B cell (primary cell): ENCODE measurements at regions of chr1 and their contacts with region 1.

Region 1: DNA sequence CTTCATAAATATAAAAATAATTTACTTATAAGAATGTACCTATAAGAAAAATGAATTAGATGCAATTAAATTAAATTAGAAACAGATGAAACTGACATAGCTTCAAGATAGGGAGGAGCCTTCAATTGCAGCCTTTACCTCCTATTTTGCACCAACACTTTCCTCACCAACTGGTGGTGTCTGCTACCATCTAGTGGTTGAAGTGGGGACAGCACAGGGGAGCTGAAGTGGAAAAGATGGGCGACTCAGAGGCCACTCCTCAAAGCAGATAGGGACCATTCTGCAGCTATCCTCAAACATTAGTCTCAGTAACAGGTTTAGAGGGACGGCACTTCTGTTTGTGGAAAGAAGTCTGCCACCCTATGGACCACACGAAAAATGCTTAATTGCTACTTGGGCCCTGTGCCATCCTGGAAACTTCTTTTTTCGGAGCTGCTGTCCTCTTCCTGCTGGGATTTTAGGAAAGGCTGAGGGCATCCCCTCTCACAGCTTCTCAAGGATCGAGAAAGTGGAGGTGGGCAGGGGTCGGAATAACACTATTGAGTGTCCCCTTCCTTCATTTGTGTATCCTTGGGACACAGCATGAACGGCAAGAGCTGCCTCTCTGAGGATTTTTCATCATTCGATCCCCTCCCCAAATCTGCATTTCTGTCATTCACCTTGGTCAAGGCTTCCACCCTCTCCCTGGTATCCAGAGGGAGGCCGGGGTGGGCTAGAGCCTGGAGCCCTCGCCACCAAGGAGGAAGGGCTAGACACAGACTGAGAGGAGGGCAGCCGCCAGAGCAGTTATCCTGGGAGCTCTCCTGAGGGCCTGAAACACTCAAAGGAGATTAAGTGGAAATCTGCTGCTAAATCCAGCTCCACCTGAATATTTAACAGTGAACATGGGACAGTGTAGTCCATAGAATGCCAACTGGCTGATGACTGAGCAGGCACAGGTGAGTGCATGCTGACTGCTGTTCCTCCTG is 9.6 kb downstream of the PROK1 start:
- DNase-seq: peak; percentile 87
- ATAC-seq: peak; percentile 99
- H3K4me3 ChIP-seq: no peak overlapping the region
- H3K4me3 Mint-ChIP-seq: no peak overlapping the region
- H3K27ac ChIP-seq: no peak overlapping the region
- H3K27ac Mint-ChIP-seq: no peak overlapping the region
- H3K4me1 ChIP-seq: peaks cover 0 to 2% of the 10 kb centered on the region in 2 donors
- H3K4me1 Mint-ChIP-seq: no peaks in the 10 kb centered on the region
- H3K27me3 ChIP-seq: peaks cover 0 to 3% (median 0%) of the 10 kb centered on the region in 4 experiments
- H3K27me3 Mint-ChIP-seq: peaks cover 4% of the 10 kb centered on the region
- CTCF ChIP-seq: peak; percentile 97

Region 2: GRCh38 chr1:110034451-110035235 is 425.9 kb before region 1 on chr1 and contains the start of gene STRIP1:
- CTCF ChIA-PET with region 1: interaction called, 5 read pairs
- POLR2A ChIA-PET with region 1: no interaction called
- intact Hi-C with region 1: loop called (anchors 2 kb)
- DNase-seq: peak; percentile 96
- ATAC-seq: peak; percentile 93
- H3K4me3 ChIP-seq: peak within 1 kb of the TSS; percentile 71 to 99 (median 93)
- H3K4me3 Mint-ChIP-seq: peak within 1 kb of the TSS; percentile 97
- H3K27ac ChIP-seq: peak within 1 kb of the TSS; percentile 76 to 95
- H3K27ac Mint-ChIP-seq: peak within 1 kb of the TSS; percentile 93
- H3K4me1 ChIP-seq: peaks cover 25 to 31% of the 10 kb centered on the region in 2 donors
- H3K4me1 Mint-ChIP-seq: peaks cover 43% of the 10 kb centered on the region
- H3K27me3 ChIP-seq: no peaks in the 10 kb centered on the region
- H3K27me3 Mint-ChIP-seq: no peaks in the 10 kb centered on the region
- CTCF ChIP-seq: no peak
- total RNA-seq, gene STRIP1: 97.5 and 105 TPM in 2 replicates

Region 3: DNA sequence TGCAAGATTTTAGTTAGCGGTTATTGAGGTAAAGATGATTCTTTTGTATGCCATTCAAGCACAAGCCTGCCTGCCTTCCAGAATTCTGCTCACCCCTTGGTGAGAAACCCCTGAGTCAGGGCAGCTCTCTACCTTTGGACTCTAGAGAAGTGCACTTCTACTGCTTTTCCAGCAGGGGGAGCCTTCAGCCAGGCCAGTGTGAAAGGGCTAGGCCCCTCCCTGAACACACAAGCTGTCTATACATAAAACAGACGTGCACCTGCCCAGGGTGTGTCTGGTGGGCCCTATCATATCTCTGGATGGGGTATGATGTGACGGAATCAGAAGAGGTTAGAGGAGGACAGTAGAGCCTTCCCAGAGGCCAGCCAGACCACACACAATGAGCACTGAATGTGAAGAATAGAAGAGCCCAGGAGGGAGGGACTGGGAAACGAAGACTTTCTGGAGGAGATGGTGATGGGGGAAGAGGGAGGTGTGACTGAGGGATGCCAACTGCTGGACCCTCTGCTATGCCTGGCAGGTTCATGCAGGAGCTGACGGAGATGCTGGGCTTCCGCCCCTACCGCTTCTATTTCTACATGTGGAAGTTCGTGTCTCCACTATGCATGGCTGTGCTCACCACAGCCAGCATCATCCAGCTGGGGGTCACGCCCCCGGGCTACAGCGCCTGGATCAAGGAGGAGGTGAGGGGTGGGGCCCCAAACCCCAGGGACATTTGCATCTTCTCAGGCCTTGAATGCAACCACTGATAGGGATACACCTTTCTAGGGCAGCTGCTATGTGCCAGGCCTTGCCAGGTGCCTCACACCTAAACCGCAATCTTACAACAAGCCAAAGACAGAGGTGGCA is 263.4 kb before region 1 on chr1:
- CTCF ChIA-PET with region 1: interaction called, 837 read pairs
- POLR2A ChIA-PET with region 1: no interaction called
- intact Hi-C with region 1: loop called (anchors 1 kb)
- DNase-seq: peak; percentile 71
- ATAC-seq: peak; percentile 93
- H3K4me3 ChIP-seq: no peak overlapping the region
- H3K4me3 Mint-ChIP-seq: no peak overlapping the region
- H3K27ac ChIP-seq: no peak overlapping the region
- H3K27ac Mint-ChIP-seq: no peak overlapping the region
- H3K4me1 ChIP-seq: no peaks in the 10 kb centered on the region
- H3K4me1 Mint-ChIP-seq: no peaks in the 10 kb centered on the region
- H3K27me3 ChIP-seq: peaks cover 0 to 3% (median 0%) of the 10 kb centered on the region in 4 experiments
- H3K27me3 Mint-ChIP-seq: peaks cover 4% of the 10 kb centered on the region
- CTCF ChIP-seq: peak; percentile 97

Region 4: GRCh38 chr1:110243574-110243973 is 217.0 kb before region 1 on chr1:
- CTCF ChIA-PET with region 1: interaction called, 13 read pairs
- POLR2A ChIA-PET with region 1: no interaction called
- intact Hi-C with region 1: no loop called
- DNase-seq: peak; percentile 78
- ATAC-seq: peak; percentile 80
- H3K4me3 ChIP-seq: no peak overlapping the region
- H3K4me3 Mint-ChIP-seq: peak overlapping the region; percentile 61
- H3K27ac ChIP-seq: peak overlapping the region in 1 of 2 donors; percentile 41
- H3K27ac Mint-ChIP-seq: peak overlapping the region; percentile 57
- H3K4me1 ChIP-seq: peaks cover 20 to 37% of the 10 kb centered on the region in 2 donors
- H3K4me1 Mint-ChIP-seq: peaks cover 40% of the 10 kb centered on the region
- H3K27me3 ChIP-seq: no peaks in the 10 kb centered on the region
- H3K27me3 Mint-ChIP-seq: no peaks in the 10 kb centered on the region
- CTCF ChIP-seq: no peak

Region 5: GRCh38 chr1:110319332-110320152 is 141.0 kb before region 1 on chr1:
- CTCF ChIA-PET with region 1: interaction called, 82 read pairs
- POLR2A ChIA-PET with region 1: no interaction called
- intact Hi-C with region 1: no loop called
- DNase-seq: no peak
- ATAC-seq: no peak
- H3K4me3 ChIP-seq: no peak overlapping the region
- H3K4me3 Mint-ChIP-seq: no peak overlapping the region
- H3K27ac ChIP-seq: no peak overlapping the region
- H3K27ac Mint-ChIP-seq: no peak overlapping the region
- H3K4me1 ChIP-seq: no peaks in the 10 kb centered on the region
- H3K4me1 Mint-ChIP-seq: no peaks in the 10 kb centered on the region
- H3K27me3 ChIP-seq: no peaks in the 10 kb centered on the region
- H3K27me3 Mint-ChIP-seq: no peaks in the 10 kb centered on the region
- CTCF ChIP-seq: no peak

Region 6: GRCh38 chr1:110407260-110408210 is 53.0 kb before region 1 on chr1 and contains the start of gene LAMTOR5:
- CTCF ChIA-PET with region 1: interaction called, 126 read pairs
- POLR2A ChIA-PET with region 1: interaction called, 4 read pairs
- intact Hi-C with region 1: loop called (anchors 1 kb)
- DNase-seq: peak; percentile 94
- ATAC-seq: peak; percentile 92
- H3K4me3 ChIP-seq: peak within 1 kb of the TSS; percentile 76 to 99 (median 90)
- H3K4me3 Mint-ChIP-seq: peak within 1 kb of the TSS; percentile 100
- H3K27ac ChIP-seq: peak within 1 kb of the TSS; percentile 87 to 90
- H3K27ac Mint-ChIP-seq: peak within 1 kb of the TSS; percentile 99
- H3K4me1 ChIP-seq: peaks cover 18 to 23% of the 10 kb centered on the region in 2 donors
- H3K4me1 Mint-ChIP-seq: peaks cover 25% of the 10 kb centered on the region
- H3K27me3 ChIP-seq: no peaks in the 10 kb centered on the region
- H3K27me3 Mint-ChIP-seq: no peaks in the 10 kb centered on the region
- CTCF ChIP-seq: peak; percentile 23
- total RNA-seq, gene LAMTOR5: 145 and 151 TPM in 2 replicates

Region 7: GRCh38 chr1:110472546-110472945 is 12.0 kb after region 1 on chr1:
- CTCF ChIA-PET with region 1: interaction called, 11 read pairs
- POLR2A ChIA-PET with region 1: no interaction called
- intact Hi-C with region 1: no loop called
- DNase-seq: no peak
- ATAC-seq: no peak
- H3K4me3 ChIP-seq: no peak overlapping the region
- H3K4me3 Mint-ChIP-seq: no peak overlapping the region
- H3K27ac ChIP-seq: no peak overlapping the region
- H3K27ac Mint-ChIP-seq: no peak overlapping the region
- H3K4me1 ChIP-seq: no peaks in the 10 kb centered on the region
- H3K4me1 Mint-ChIP-seq: no peaks in the 10 kb centered on the region
- H3K27me3 ChIP-seq: peaks cover 0 to 3% (median 0%) of the 10 kb centered on the region in 4 experiments
- H3K27me3 Mint-ChIP-seq: peaks cover 35% of the 10 kb centered on the region
- CTCF ChIP-seq: no peak

Region 8: DNA sequence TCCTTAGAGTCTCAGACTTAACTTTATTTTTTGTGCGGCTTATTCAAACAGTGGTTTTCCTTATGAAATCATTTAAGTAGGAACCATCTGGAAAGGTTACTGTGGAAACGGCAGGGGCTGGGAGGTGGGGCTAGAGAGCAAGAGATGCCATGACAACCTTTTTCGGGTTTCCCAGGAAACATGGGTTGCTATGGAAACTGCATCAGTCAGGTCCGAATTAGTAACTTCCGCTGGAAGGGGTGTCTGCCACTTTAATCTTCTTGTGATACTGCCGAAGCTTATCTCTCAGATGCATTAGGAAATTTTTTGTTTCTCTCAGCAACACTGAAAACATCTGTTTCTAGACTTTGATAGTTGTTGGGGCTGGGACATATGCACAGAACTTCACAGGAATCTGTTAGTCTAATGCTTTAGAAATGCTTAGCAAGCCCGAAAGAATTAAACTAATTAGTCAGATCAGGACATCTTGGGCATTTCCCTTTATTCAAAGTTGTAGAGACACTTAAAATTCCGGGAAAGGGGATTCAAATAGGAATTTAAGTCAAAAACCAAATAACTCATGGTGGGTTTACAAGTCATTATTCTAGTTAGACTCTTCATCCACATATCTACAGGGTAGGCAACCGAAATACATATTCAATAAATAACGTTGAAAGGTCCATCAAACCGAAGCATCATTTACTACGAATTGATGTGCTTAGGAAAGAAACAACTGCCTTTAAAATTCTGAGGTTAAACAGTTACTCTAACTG is 211.6 kb after region 1 on chr1:
- CTCF ChIA-PET with region 1: no interaction called
- POLR2A ChIA-PET with region 1: no interaction called
- intact Hi-C with region 1: no loop called
- DNase-seq: peak; percentile 62
- ATAC-seq: no peak
- H3K4me3 ChIP-seq: peak overlapping the region; percentile 50 to 75 (median 65)
- H3K4me3 Mint-ChIP-seq: peak overlapping the region; percentile 84
- H3K27ac ChIP-seq: peak overlapping the region; percentile 68 to 76
- H3K27ac Mint-ChIP-seq: peak overlapping the region; percentile 81
- H3K4me1 ChIP-seq: peaks cover 38 to 52% of the 10 kb centered on the region in 2 donors
- H3K4me1 Mint-ChIP-seq: peaks cover 63% of the 10 kb centered on the region
- H3K27me3 ChIP-seq: no peaks in the 10 kb centered on the region
- H3K27me3 Mint-ChIP-seq: no peaks in the 10 kb centered on the region
- CTCF ChIP-seq: no peak

Region 9: GRCh38 chr1:110872745-110873720 is 412.5 kb after region 1 on chr1 and contains the start of gene CD53:
- CTCF ChIA-PET with region 1: no interaction called
- POLR2A ChIA-PET with region 1: no interaction called
- intact Hi-C with region 1: no loop called
- DNase-seq: peak; percentile 92
- ATAC-seq: peak; percentile 66
- H3K4me3 ChIP-seq: peak within 1 kb of the TSS; percentile 73 to 100 (median 97)
- H3K4me3 Mint-ChIP-seq: peak within 1 kb of the TSS; percentile 99
- H3K27ac ChIP-seq: peak within 1 kb of the TSS; percentile 96 to 99
- H3K27ac Mint-ChIP-seq: peak within 1 kb of the TSS; percentile 99
- H3K4me1 ChIP-seq: peaks cover 60% of the 10 kb centered on the region in 2 donors
- H3K4me1 Mint-ChIP-seq: peaks cover 70% of the 10 kb centered on the region
- H3K27me3 ChIP-seq: no peaks in the 10 kb centered on the region
- H3K27me3 Mint-ChIP-seq: no peaks in the 10 kb centered on the region
- CTCF ChIP-seq: no peak
- total RNA-seq, gene CD53: 490 and 495 TPM in 2 replicates